ENCODE measurements at regions of chr22 and their contacts with region 1.

Region 1: DNA sequence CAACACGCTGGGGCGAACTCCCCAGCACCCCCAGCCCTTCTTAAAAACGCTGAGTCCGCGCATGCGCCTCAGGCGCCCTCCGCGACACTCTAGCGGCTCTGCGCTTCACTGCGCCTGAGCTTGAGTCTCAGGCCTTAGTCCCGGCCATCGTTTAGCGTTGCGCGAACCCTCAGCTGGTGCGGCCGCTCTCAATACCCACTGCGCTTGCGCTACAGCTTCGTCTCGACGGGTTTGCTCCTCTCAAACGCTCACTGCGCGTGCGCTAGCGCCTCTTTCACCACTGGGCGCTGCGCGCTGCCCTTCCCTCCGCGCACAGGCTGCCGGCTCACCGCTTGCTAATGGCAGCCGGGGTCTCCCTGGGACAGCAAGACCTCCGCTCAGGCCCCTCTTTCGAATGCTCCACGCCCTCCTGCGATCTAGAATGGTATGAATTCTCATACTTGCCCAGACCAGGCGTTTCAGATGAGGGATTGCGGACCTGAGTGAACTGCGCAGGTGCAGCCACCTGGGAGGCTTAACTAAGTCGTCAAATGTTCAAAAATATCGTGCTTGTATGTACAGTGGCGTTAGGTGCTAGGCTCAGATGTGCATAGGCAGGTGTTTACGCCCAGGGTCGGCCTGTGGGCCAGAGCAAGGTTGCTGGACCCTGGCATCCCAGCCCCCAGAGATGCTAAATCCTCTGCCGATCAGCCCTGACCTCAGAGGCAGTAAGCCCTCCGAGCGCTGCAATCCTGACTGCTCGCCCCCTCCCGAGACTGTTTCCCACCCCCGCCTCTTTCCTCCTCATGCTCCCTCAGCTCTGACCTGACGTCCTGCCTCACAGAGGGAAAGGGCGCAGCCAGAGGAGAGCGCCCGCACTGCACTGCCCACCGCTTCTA is at the start of gene SLC2A11:
- DNase-seq: peak; percentile 98
- H3K4me3 ChIP-seq: peak within 1 kb of the TSS; percentile 64 to 83 (median 65)
- H3K27ac ChIP-seq: no peak within 1 kb of the TSS
- H3K4me1 ChIP-seq: peaks cover 15% of the 10 kb centered on the region
- H3K27me3 ChIP-seq: no peaks in the 10 kb centered on the region
- CTCF ChIP-seq: peak in 1 of 2 donors; percentile 32
- POLR2A ChIP-seq: peak; percentile 76
- total RNA-seq, gene SLC2A11: 3.6 and 4.6 TPM in 2 replicates

Region 2: GRCh38 chr22:23888615-23889401 is 31.0 kb after region 1 on chr22:
- CTCF ChIA-PET with region 1: interaction called, 39 read pairs
- POLR2A ChIA-PET with region 1: interaction called, 5 read pairs
- dilution Hi-C with region 1: no loop called
- intact Hi-C with region 1: loop called (anchors 1 kb)
- DNase-seq: peak; percentile 3
- H3K4me3 ChIP-seq: no peak overlapping the region
- H3K27ac ChIP-seq: peak overlapping the region; percentile 78
- H3K4me1 ChIP-seq: peaks cover 9% of the 10 kb centered on the region
- H3K27me3 ChIP-seq: no peaks in the 10 kb centered on the region
- CTCF ChIP-seq: peak in 1 of 2 donors; percentile 6
- POLR2A ChIP-seq: no peak

Region 3: GRCh38 chr22:24001314-24001713 is 143.5 kb after region 1 on chr22:
- CTCF ChIA-PET with region 1: no interaction called
- POLR2A ChIA-PET with region 1: no interaction called
- dilution Hi-C with region 1: no loop called
- intact Hi-C with region 1: no loop called
- DNase-seq: no peak
- H3K4me3 ChIP-seq: no peak overlapping the region
- H3K27ac ChIP-seq: no peak overlapping the region
- H3K4me1 ChIP-seq: no peaks in the 10 kb centered on the region
- H3K27me3 ChIP-seq: no peaks in the 10 kb centered on the region
- CTCF ChIP-seq: no peak
- POLR2A ChIP-seq: no peak